HEK293 (cell line): ENCODE measurements at regions of chr6 and their contacts with region 1.

Region 1: GRCh38 chr6:116531675-116532570 is 13.6 kb downstream of the TRAPPC3L start:
- H3K4me3 ChIP-seq: no peak overlapping the region
- H3K27ac ChIP-seq: no peak overlapping the region
- H3K4me1 ChIP-seq: peaks cover 28% of the 10 kb centered on the region
- CTCF ChIP-seq: 0 out of 2 replicates have a peak, but pooled peaks have one; percentile 36

Region 2: DNA sequence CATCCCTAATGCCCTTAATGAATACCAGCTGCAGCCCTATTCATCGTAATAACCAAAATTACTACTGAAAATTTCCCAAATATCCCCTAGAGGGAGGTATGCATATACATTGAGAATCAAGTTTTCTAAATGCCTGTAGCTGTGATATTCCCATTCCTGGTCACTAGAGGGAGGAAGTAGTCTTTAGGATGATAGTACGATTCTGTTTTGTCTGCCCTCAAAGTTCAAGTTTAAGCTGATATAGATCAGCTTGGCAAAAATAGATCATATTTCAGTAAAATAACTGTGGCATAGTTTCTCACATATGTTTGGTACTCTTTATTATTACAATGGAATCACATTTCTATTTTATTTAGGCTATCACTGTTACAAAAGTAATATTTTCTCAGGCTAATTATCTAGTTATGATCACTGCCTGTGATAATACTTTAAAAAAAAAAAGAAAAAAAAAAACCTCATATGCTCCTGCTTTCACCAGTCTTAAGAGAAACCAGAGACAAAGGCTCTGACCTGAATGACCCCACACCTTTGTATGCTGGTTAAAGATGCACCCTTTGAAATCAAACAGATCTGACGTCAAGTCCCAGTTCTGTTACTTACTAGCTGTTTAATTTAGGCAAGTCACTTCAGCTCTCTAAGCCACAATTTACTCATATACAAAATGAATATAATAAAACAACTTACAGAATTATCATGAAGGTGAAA is 263.2 kb before region 1 on chr6:
- CTCF ChIA-PET with region 1: interaction called, 37 read pairs
- POLR2A ChIA-PET with region 1: no interaction called
- H3K4me3 ChIP-seq: no peak overlapping the region
- H3K27ac ChIP-seq: no peak overlapping the region
- H3K4me1 ChIP-seq: no peaks in the 10 kb centered on the region
- CTCF ChIP-seq: peak; percentile 76

Region 3: GRCh38 chr6:116444092-116444491 is 87.8 kb before region 1 on chr6:
- CTCF ChIA-PET with region 1: interaction called, 20 read pairs
- POLR2A ChIA-PET with region 1: no interaction called
- H3K4me3 ChIP-seq: no peak overlapping the region
- H3K27ac ChIP-seq: no peak overlapping the region
- H3K4me1 ChIP-seq: peaks cover 14% of the 10 kb centered on the region
- CTCF ChIP-seq: 0 out of 2 replicates have a peak, but pooled peaks have one; percentile 20

Region 4: GRCh38 chr6:116511404-116512110 is 20.4 kb before region 1 on chr6 and contains the start of gene CALHM5:
- CTCF ChIA-PET with region 1: interaction called, 75 read pairs
- POLR2A ChIA-PET with region 1: interaction called, 8 read pairs
- H3K4me3 ChIP-seq: peak within 1 kb of the TSS; percentile 27
- H3K27ac ChIP-seq: peak within 1 kb of the TSS; percentile 28
- H3K4me1 ChIP-seq: peaks cover 13% of the 10 kb centered on the region
- CTCF ChIP-seq: peak; percentile 50

Region 5: DNA sequence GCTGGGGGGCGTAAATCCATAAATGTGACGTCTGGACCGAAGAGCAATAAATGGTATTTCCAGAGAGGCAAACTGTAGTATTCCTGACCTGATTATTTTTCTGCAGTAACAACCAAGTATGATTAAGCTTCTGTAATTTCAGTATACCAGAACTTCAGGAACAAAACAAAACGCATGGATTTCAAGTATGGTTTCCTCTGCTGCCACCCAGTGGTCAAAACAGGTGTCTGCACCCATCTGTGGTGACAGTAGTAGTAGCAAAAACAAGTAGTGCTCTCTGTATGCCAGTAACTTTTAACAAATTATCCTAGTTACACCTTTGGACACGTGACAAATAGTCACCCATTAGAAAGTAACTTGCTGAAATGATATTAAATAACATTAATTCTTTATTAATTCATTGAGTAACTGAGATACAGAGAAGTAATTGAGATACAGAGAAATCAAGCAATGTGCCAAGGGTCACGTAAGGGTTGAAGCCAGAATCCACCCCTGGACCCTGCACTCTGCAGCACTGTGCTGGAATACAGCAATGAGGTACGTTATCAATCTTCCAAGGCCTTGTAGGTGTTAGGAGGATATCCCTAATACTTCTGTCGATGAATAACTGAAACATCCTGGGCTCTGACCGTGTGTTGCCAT is 29.6 kb after region 1 on chr6:
- CTCF ChIA-PET with region 1: interaction called, 66 read pairs
- POLR2A ChIA-PET with region 1: no interaction called
- H3K4me3 ChIP-seq: no peak overlapping the region
- H3K27ac ChIP-seq: no peak overlapping the region
- H3K4me1 ChIP-seq: peaks cover 4% of the 10 kb centered on the region; the same call in 1 of the 2 replicates
- CTCF ChIP-seq: peak; percentile 48; the same call in 1 of the 2 replicates

Region 6: GRCh38 chr6:116847227-116847626 is 315.3 kb after region 1 on chr6:
- CTCF ChIA-PET with region 1: interaction called, 21 read pairs
- POLR2A ChIA-PET with region 1: no interaction called
- H3K4me3 ChIP-seq: no peak overlapping the region
- H3K27ac ChIP-seq: no peak overlapping the region
- H3K4me1 ChIP-seq: no peaks in the 10 kb centered on the region
- CTCF ChIP-seq: 0 out of 2 replicates have a peak, but pooled peaks have one; percentile 24